ENCODE measurements at regions of chr12 and their contacts with region 1.

Region 1: GRCh38 chr12:113232840-113233585 is 11.7 kb downstream of the TPCN1 start:
- DNase-seq: no peak

Region 2: DNA sequence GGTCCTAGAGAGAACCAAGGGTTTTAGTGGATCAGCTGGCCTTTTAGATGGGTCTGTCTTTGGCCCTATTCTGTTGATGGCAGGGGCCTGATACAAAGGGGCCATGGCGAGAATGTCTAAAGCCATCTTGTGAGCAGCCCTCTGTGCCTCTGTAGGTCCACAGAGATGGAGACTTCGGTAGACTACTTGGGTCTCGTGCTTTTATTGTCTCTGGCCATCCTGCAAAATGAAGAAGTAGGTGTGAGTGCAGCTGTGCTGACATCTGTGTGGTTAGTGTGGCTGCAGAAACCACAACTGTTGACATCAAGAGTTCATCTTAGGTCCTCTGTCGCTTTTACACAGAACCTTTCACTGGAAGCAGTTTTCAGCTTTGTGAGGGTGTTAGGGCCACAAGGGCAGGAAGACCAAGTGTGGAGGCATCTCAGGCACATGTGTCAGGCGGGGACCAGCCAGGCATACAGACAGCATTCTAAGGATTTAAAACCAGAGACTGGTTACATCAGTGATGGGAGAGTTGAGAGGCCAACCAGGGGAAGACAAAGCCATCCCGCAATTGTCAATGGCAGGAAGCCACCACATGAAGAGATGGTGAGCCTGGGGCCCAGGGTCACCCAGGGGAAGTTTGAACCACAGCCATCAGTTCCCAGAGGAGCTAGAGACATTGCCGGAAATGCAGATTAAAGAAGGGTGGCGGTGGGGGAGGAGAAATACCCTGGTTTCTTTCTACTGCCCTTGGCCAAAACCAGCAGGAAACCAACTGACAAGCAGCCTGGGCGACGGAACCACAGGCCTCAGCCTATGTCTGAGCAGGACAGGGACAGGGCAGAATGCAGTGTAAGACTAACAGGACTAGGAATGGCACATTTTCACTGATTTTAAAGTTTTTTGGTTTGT is 24.7 kb before region 1 on chr12:
- intact Hi-C with region 1: no loop called
- DNase-seq: no peak

Region 3: DNA sequence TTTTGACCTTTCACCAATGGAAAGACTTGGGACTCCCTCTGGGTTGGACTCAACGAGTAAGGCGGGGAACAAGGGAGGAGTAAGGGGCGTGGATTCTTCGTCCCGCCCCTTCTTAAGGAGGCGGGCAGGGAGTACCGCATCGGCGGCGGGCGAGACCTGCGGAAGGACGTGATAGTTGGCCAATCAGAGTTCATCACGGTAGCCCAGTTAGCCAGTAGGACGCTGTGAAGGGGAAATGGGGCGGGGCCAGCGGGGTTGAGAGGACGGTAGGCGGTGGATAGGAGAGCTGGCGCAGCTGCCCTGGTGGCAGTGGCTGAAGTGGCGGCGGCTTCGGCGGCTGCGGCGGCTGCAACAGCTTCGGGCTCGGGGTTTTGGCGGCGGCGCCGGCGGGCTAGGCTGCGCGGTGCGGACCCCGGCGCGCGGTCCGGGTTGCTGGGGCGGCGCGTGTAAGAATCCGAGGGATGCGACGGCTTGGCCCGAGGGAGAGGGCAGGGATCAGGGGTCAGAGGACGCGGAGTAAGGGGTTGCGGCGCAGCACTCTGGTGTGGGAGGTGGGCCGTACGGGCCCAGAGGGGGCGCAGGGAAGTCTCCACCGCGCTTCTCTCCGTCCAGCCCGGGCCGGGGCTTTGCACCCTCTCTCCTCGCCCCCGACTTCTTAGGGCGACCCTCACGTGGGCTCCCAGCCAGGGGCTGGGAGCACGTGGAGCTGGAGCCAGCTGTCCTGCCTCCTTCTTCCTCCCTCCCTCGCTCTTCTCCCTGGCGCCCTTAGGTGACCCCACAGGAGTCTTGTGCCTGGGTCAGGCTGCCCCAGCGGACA is 11.6 kb before region 1 on chr12 and contains the start of gene TPCN1:
- intact Hi-C with region 1: no loop called
- DNase-seq: peak; percentile 99
- total RNA-seq, gene TPCN1: 77.1 TPM

Region 4: DNA sequence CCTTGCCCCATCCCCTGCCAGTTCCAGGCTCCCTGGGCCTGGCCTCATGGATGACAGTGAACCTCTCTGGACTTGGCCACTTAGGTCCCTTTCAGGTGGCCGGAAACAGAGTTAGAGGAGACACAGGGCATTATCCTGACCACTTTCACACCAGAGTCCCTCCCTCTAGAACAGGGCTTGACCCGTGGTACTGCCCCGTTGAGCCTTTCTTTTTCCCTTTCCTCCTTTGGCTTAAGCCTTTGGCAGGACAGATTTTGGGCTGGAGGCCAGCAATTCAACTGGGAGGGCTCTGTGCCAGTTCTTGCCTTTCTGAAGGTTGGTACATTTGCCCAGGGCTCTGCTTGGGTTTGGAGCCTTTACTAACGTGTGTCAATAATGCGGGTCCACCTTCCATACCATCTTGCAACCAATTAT is 11.0 kb after region 1 on chr12:
- intact Hi-C with region 1: loop called (anchors 2 kb)
- DNase-seq: no peak

Region 5: DNA sequence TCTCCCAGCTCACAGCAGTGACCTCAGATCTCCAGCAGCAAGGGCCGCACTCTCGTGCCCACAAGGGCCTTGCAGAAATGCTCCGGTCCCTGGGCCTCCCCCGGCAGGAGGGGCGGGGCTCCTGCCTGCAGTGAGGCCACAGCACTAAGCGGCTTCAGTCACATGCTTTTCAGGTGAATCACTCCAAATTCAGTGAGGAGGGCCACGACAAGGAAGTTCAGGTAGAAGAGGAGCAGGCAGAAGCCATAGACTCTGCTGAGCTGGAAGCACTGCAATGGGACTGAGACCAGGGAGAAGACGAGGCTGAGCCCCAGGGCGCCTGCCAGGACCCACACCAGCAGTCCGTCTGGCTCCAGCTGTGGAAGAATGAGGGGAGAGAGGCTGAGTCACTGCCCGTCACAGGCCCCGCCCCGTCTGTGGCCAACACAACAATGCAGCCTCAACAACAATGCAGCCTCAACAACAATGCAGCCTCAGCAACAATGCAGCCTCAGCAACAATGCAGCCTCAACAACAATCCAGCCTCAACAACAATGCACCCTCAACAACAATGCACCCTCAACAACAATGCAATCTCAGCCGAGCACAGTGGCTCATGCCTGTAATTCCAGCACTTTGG is 66.7 kb after region 1 on chr12:
- intact Hi-C with region 1: loop called (anchors 5 kb)
- DNase-seq: no peak

Region 6: DNA sequence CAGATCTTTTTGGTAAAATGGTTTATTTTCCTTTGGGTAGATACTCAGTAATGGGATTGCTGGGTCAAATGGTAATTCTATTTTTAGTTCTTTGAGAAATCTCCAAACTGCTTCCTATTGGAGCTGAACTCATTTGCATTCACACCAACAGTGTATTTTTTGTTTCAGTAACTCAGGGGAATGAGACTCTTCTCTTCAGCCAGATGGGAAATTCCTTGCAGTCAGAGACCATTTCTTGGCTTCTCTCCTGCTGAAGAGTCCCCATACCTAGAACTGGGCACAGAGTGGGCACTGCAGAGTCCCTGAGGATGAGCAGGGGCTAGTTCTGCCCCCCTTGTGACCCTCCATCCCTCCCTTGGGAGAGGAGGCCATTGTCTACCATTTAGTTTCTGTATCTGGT is 200.0 kb after region 1 on chr12:
- intact Hi-C with region 1: no loop called
- DNase-seq: no peak